Mammary epithelial cell (primary cell): ENCODE measurements at regions of chr3 and their contacts with region 1.

Region 1: GRCh38 chr3:193780810-193781472 is 187.9 kb downstream of the OPA1 start:
- DNase-seq: peak; percentile 94
- H3K4me3 ChIP-seq: no peak overlapping the region
- H3K27ac ChIP-seq: peak overlapping the region; percentile 95
- H3K4me1 ChIP-seq: peaks cover 42% of the 10 kb centered on the region
- H3K27me3 ChIP-seq: no peaks in the 10 kb centered on the region
- CTCF ChIP-seq: peak; percentile 62 to 94

Region 2: GRCh38 chr3:193465992-193466608 is 314.8 kb before region 1 on chr3:
- CTCF ChIA-PET with region 1: no interaction called
- dilution Hi-C with region 1: no loop called
- in situ Hi-C with region 1: no loop called
- intact Hi-C with region 1: no loop called
- DNase-seq: no peak
- H3K4me3 ChIP-seq: no peak overlapping the region
- H3K27ac ChIP-seq: no peak overlapping the region
- H3K4me1 ChIP-seq: no peaks in the 10 kb centered on the region
- H3K27me3 ChIP-seq: peaks cover 4% of the 10 kb centered on the region
- CTCF ChIP-seq: no peak

Region 3: GRCh38 chr3:193831495-193832455 is 50.8 kb after region 1 on chr3:
- CTCF ChIA-PET with region 1: interaction called, 14 read pairs
- dilution Hi-C with region 1: no loop called
- in situ Hi-C with region 1: loop called in 1 of 2 experiments (anchors 5 kb)
- intact Hi-C with region 1: loop called (anchors 1 kb)
- DNase-seq: peak; percentile 100
- H3K4me3 ChIP-seq: no peak overlapping the region
- H3K27ac ChIP-seq: peak overlapping the region; percentile 100
- H3K4me1 ChIP-seq: peaks cover 51% of the 10 kb centered on the region
- H3K27me3 ChIP-seq: no peaks in the 10 kb centered on the region
- CTCF ChIP-seq: no peak

Region 4: DNA sequence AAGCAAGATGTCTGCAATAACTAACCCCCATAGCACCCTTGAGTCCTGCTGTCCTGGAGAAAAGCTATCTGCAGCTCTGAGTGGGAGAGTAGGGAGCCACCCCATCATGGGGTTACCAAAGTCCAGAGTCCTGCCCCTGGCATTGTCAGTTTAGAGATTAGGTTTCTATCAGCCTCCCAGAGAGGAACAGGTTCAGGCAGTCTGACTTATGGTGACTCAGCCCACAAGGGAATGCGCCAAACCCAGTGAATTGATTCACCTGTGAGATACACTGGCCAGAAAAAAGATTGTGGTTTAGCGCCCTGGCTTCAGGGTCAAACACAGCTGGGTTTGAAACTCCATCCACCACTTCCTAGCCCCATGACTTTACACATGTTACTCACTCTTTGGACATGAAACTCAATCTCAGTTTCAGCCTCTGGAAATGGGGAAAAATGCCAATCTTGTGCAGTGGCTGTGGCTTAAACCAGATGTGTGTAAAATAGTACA is 91.4 kb after region 1 on chr3:
- CTCF ChIA-PET with region 1: no interaction called
- dilution Hi-C with region 1: no loop called
- in situ Hi-C with region 1: loop called in 1 of 2 experiments (anchors 10 kb)
- intact Hi-C with region 1: loop called (anchors 1 kb)
- DNase-seq: peak; percentile 100
- H3K4me3 ChIP-seq: no peak overlapping the region
- H3K27ac ChIP-seq: peak overlapping the region; percentile 94
- H3K4me1 ChIP-seq: peaks cover 71% of the 10 kb centered on the region
- H3K27me3 ChIP-seq: no peaks in the 10 kb centered on the region
- CTCF ChIP-seq: no peak

Region 5: GRCh38 chr3:194003125-194004057 is 222.4 kb after region 1 on chr3:
- CTCF ChIA-PET with region 1: no interaction called
- dilution Hi-C with region 1: no loop called
- in situ Hi-C with region 1: no loop called
- intact Hi-C with region 1: loop called (anchors 1 kb)
- DNase-seq: peak; percentile 94
- H3K4me3 ChIP-seq: peak overlapping the region; percentile 29 to 41 (median 32)
- H3K27ac ChIP-seq: peak overlapping the region; percentile 75
- H3K4me1 ChIP-seq: peaks cover 25% of the 10 kb centered on the region
- H3K27me3 ChIP-seq: no peaks in the 10 kb centered on the region
- CTCF ChIP-seq: no peak

Region 6: GRCh38 chr3:194089357-194090177 is 308.6 kb after region 1 on chr3:
- CTCF ChIA-PET with region 1: interaction called, 4 read pairs
- dilution Hi-C with region 1: no loop called
- in situ Hi-C with region 1: no loop called
- intact Hi-C with region 1: loop called (anchors 1 kb)
- DNase-seq: peak; percentile 100
- H3K4me3 ChIP-seq: no peak overlapping the region
- H3K27ac ChIP-seq: peak overlapping the region; percentile 77
- H3K4me1 ChIP-seq: peaks cover 34% of the 10 kb centered on the region
- H3K27me3 ChIP-seq: no peaks in the 10 kb centered on the region
- CTCF ChIP-seq: no peak

Region 7: GRCh38 chr3:194344012-194344411 is 563.1 kb after region 1 on chr3:
- CTCF ChIA-PET with region 1: interaction called, 5 read pairs
- dilution Hi-C with region 1: no loop called
- in situ Hi-C with region 1: no loop called
- intact Hi-C with region 1: loop called (anchors 1 kb)
- DNase-seq: peak; percentile 32
- H3K4me3 ChIP-seq: no peak overlapping the region
- H3K27ac ChIP-seq: no peak overlapping the region
- H3K4me1 ChIP-seq: no peaks in the 10 kb centered on the region
- H3K27me3 ChIP-seq: no peaks in the 10 kb centered on the region
- CTCF ChIP-seq: peak; percentile 95 to 98